ENCODE measurements at regions of chr11 and their contacts with region 1.

Region 1: GRCh38 chr11:65540297-65541092 is 15.6 kb downstream of the SCYL1 start:
- DNase-seq: peak; percentile 81 to 94 (median 85)
- ATAC-seq: peak; percentile 82
- H3K4me3 ChIP-seq: peak overlapping the region; percentile 80
- H3K4me3 Mint-ChIP-seq: peak overlapping the region; percentile 90
- H3K27ac ChIP-seq: peak overlapping the region; percentile 14 to 64
- H3K27ac Mint-ChIP-seq: peak overlapping the region; percentile 65
- H3K4me1 ChIP-seq: peaks cover 23% of the 10 kb centered on the region
- H3K4me1 Mint-ChIP-seq: peaks cover 25% of the 10 kb centered on the region
- H3K27me3 ChIP-seq: no peaks in the 10 kb centered on the region
- H3K27me3 Mint-ChIP-seq: no peaks in the 10 kb centered on the region
- CTCF ChIP-seq: peak; percentile 79

Region 2: GRCh38 chr11:65530157-65530496 is 10.4 kb before region 1 on chr11:
- CTCF ChIA-PET with region 1: interaction called, 12 read pairs
- POLR2A ChIA-PET with region 1: interaction called, 27 read pairs
- intact Hi-C with region 1: loop called in 1 of 2 experiments (anchors 1 kb)
- DNase-seq: peak in 4 of 14 experiments; percentile 38 to 67 (median 55)
- ATAC-seq: peak; percentile 79
- H3K4me3 ChIP-seq: no peak overlapping the region
- H3K4me3 Mint-ChIP-seq: peak overlapping the region; percentile 20
- H3K27ac ChIP-seq: no peak overlapping the region
- H3K27ac Mint-ChIP-seq: peak overlapping the region; percentile 63
- H3K4me1 ChIP-seq: peaks cover 42% of the 10 kb centered on the region
- H3K4me1 Mint-ChIP-seq: peaks cover 31% of the 10 kb centered on the region
- H3K27me3 ChIP-seq: no peaks in the 10 kb centered on the region
- H3K27me3 Mint-ChIP-seq: no peaks in the 10 kb centered on the region
- CTCF ChIP-seq: no peak

Region 3: GRCh38 chr11:65558002-65558931 is 17.8 kb after region 1 on chr11 and contains the start of gene LTBP3:
- CTCF ChIA-PET with region 1: interaction called, 21 read pairs
- POLR2A ChIA-PET with region 1: interaction called, 41 read pairs
- intact Hi-C with region 1: no loop called
- DNase-seq: peak in 7 of 14 experiments; percentile 36 to 73 (median 65)
- ATAC-seq: peak; percentile 39
- H3K4me3 ChIP-seq: peak within 1 kb of the TSS; percentile 63
- H3K4me3 Mint-ChIP-seq: peak within 1 kb of the TSS; percentile 94
- H3K27ac ChIP-seq: peak within 1 kb of the TSS; percentile 80
- H3K27ac Mint-ChIP-seq: peak within 1 kb of the TSS; percentile 87
- H3K4me1 ChIP-seq: peaks cover 80% of the 10 kb centered on the region
- H3K4me1 Mint-ChIP-seq: peaks cover 59% of the 10 kb centered on the region
- H3K27me3 ChIP-seq: no peaks in the 10 kb centered on the region
- H3K27me3 Mint-ChIP-seq: no peaks in the 10 kb centered on the region
- CTCF ChIP-seq: no peak
- total RNA-seq, gene LTBP3: 236 to 238 TPM

Region 4: GRCh38 chr11:65593518-65594298 is 53.2 kb after region 1 on chr11:
- CTCF ChIA-PET with region 1: interaction called, 86 read pairs
- POLR2A ChIA-PET with region 1: interaction called, 23 read pairs
- intact Hi-C with region 1: loop called (anchors 1 kb)
- DNase-seq: peak in 9 of 14 experiments; percentile 37 to 67 (median 43)
- ATAC-seq: peak; percentile 62
- H3K4me3 ChIP-seq: no peak overlapping the region
- H3K4me3 Mint-ChIP-seq: no peak overlapping the region
- H3K27ac ChIP-seq: no peak overlapping the region
- H3K27ac Mint-ChIP-seq: peak overlapping the region; percentile 36
- H3K4me1 ChIP-seq: peaks cover 31% of the 10 kb centered on the region
- H3K4me1 Mint-ChIP-seq: peaks cover 17% of the 10 kb centered on the region
- H3K27me3 ChIP-seq: no peaks in the 10 kb centered on the region
- H3K27me3 Mint-ChIP-seq: no peaks in the 10 kb centered on the region
- CTCF ChIP-seq: peak; percentile 66

Region 5: DNA sequence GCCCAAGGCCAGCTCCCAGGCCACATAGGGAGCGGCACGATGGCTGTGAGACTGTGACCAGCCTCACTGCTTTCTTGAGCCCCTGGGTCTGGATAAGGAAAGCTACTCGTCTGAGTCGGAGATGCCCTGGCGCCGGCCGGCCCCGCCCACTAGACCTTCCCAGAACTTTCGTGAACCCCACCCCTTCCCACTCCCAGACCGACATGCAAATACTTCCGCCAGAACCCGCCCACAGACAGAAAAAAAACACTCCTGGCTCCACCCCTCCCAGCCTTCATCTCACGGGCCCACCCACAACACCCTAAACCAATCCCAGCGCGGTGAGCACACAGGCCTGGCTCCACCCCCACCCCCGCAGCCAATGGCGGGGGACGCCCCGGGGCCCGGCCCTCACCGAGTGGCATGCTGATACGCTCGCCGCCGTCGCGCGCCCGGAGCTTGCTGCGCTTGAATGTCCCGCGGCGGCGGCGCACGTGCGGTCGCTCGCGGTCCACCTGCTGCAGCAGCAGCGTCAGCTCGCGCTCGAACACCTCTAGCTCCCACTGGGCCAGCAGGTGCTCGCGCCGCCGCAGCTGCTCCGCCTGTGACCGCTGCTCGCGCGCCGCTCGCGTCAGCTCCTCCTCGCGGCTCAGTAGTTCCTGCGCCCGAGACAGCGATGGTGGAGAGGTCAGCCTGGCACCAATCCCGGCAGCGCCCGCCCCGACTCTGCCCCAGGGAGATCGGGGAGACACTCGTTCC is 66.5 kb after region 1 on chr11:
- CTCF ChIA-PET with region 1: no interaction called
- POLR2A ChIA-PET with region 1: no interaction called
- intact Hi-C with region 1: no loop called
- DNase-seq: peak in 1 of 14 experiments; percentile 57
- ATAC-seq: peak; percentile 52
- H3K4me3 ChIP-seq: no peak overlapping the region
- H3K4me3 Mint-ChIP-seq: no peak overlapping the region
- H3K27ac ChIP-seq: no peak overlapping the region
- H3K27ac Mint-ChIP-seq: no peak overlapping the region
- H3K4me1 ChIP-seq: peaks cover 31% of the 10 kb centered on the region
- H3K4me1 Mint-ChIP-seq: peaks cover 25% of the 10 kb centered on the region
- H3K27me3 ChIP-seq: no peaks in the 10 kb centered on the region
- H3K27me3 Mint-ChIP-seq: no peaks in the 10 kb centered on the region
- CTCF ChIP-seq: no peak